ENCODE measurements at regions of chr10 and their contacts with region 1.

Region 1: GRCh38 chr10:61896854-61897661 is 4.4 kb upstream of the ARID5B start:
- DNase-seq: peak; percentile 9 to 70 (median 65)
- H3K4me3 ChIP-seq: peak overlapping the region; percentile 26
- H3K4me3 Mint-ChIP-seq: peak overlapping the region; percentile 49 to 85 (median 78)
- H3K27ac ChIP-seq: no peak overlapping the region
- H3K27ac Mint-ChIP-seq: peak overlapping the region; percentile 3 to 98 (median 82)
- H3K4me1 ChIP-seq: peaks cover 31% of the 10 kb centered on the region
- H3K4me1 Mint-ChIP-seq: peaks cover 30 to 37% (median 34%) of the 10 kb centered on the region in 3 donors
- H3K27me3 ChIP-seq: no peaks in the 10 kb centered on the region
- H3K27me3 Mint-ChIP-seq: no peaks in the 10 kb centered on the region

Region 2: GRCh38 chr10:61869276-61869675 is 27.8 kb before region 1 on chr10:
- CTCF ChIA-PET with region 1: interaction called, 13 read pairs
- POLR2A ChIA-PET with region 1: interaction called, 5 read pairs
- DNase-seq: no peak
- H3K4me3 ChIP-seq: no peak overlapping the region
- H3K4me3 Mint-ChIP-seq: peak overlapping the region in 2 of 7 donors; percentile 12 to 35
- H3K27ac ChIP-seq: no peak overlapping the region
- H3K27ac Mint-ChIP-seq: no peak overlapping the region
- H3K4me1 ChIP-seq: peaks cover 5% of the 10 kb centered on the region
- H3K4me1 Mint-ChIP-seq: peaks cover 3 to 7% (median 5%) of the 10 kb centered on the region in 3 donors
- H3K27me3 ChIP-seq: no peaks in the 10 kb centered on the region
- H3K27me3 Mint-ChIP-seq: peaks cover 0 to 8% of the 10 kb centered on the region in 2 donors

Region 3: DNA sequence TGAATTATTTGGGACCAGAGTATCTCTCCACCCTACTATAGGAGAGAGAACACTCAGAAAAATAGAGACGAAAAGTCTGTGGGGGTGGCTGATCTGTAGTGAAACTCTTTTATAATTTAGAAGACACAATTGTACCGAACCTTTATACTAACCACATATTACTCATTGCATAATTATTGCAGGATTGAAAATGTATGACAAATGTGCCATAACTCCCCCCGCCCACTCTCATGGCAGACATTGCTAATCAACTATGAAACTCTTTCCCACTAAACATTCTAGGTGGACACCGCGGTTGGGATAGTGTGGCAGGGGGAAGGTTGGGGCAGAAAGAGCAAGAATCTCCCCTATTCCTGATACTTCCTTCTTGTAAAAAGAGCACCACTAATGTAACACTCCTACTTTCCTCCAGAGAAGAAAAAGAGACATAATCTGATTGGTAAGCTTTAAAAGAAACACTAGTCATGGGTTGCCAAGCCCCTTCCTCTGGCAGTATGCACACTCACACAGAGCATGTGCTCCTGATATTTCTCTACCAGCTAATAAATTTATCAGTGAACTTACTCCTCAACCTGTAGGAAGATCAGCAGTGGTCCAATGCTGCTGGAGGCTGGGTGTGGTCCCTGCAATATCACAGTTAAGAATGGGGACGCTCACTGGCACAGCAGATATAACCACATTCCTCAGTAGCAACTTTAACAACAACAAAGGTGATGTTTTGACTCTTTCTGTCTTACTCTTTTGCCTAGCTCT is 14.3 kb before region 1 on chr10:
- CTCF ChIA-PET with region 1: interaction called, 12 read pairs
- POLR2A ChIA-PET with region 1: no interaction called
- DNase-seq: no peak
- H3K4me3 ChIP-seq: no peak overlapping the region
- H3K4me3 Mint-ChIP-seq: no peak overlapping the region
- H3K27ac ChIP-seq: no peak overlapping the region
- H3K27ac Mint-ChIP-seq: peak overlapping the region in 2 of 8 donors; percentile 5 to 15
- H3K4me1 ChIP-seq: no peaks in the 10 kb centered on the region
- H3K4me1 Mint-ChIP-seq: peaks cover 11 to 13% (median 12%) of the 10 kb centered on the region in 3 donors
- H3K27me3 ChIP-seq: no peaks in the 10 kb centered on the region
- H3K27me3 Mint-ChIP-seq: peaks cover 3 to 7% of the 10 kb centered on the region in 2 donors

Region 4: DNA sequence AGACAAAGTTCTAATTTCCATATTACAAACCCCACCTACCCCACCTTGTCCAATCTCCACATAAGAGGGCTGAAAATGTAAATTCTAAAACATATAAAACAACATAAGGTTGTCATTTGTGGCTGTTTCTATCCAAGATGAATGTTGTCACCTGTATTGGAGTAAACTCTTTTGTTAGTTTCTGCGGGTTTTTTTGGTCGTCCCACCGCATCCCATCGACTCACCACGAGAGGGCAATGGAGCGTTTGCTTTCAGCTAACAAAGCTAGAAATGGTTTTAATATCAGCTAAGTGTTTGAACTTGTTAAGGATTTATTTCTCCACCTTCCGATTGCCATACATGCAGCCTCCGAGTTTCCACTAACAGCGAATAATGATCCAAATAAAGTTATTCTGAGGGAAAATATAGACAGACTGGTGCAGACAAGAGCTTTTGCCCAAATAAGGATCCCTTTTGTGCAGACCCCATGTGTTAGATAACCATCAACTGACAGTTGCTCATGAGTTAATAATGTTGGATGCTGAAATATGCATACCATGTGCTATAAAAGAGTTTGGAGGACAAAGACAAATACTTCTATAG is 141.6 kb after region 1 on chr10:
- CTCF ChIA-PET with region 1: interaction called, 47 read pairs
- POLR2A ChIA-PET with region 1: interaction called, 14 read pairs
- DNase-seq: peak; percentile 50 to 81 (median 61)
- H3K4me3 ChIP-seq: peak overlapping the region; percentile 10
- H3K4me3 Mint-ChIP-seq: peak overlapping the region in 6 of 7 donors; percentile 9 to 67 (median 42)
- H3K27ac ChIP-seq: no peak overlapping the region
- H3K27ac Mint-ChIP-seq: peak overlapping the region in 6 of 8 donors; percentile 1 to 78 (median 42)
- H3K4me1 ChIP-seq: peaks cover 49% of the 10 kb centered on the region
- H3K4me1 Mint-ChIP-seq: peaks cover 49 to 80% (median 70%) of the 10 kb centered on the region in 3 donors
- H3K27me3 ChIP-seq: no peaks in the 10 kb centered on the region
- H3K27me3 Mint-ChIP-seq: no peaks in the 10 kb centered on the region

Region 5: DNA sequence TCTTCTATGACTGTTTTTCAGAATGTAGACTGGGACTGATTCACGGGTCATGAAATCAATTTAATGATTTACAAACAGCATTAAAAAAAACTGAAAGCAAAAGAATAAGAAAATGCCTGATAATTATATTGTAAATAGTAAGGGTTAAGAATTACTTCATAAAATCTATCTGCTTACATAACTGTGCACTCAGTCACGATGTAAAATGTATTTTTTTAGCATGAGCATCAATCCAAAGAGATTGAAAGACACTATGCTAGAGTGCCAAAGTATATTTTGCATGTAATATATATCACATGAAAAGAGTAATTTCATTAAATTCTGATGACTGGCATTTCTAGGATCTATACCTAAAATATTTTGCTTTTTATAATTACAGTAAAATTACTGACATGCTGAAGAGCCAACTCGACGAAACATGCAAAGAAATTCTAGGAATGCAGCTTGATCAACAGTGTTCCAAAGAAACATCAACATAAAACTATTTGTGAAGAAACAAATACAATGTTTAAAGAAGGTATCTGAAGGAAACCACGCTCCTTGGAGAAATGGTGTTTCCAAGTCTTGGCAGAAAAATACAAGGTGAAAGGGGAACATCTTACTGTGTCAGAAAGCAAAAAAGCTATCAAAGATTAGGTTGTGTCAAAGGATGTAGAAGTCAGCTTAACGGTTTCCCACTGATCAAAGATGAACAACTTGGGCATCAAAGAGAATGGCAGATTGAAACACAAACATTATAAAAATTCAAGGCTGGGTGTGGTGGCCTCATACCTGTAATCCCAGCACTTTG is 336.6 kb after region 1 on chr10:
- CTCF ChIA-PET with region 1: no interaction called
- POLR2A ChIA-PET with region 1: no interaction called
- DNase-seq: no peak
- H3K4me3 ChIP-seq: no peak overlapping the region
- H3K4me3 Mint-ChIP-seq: peak overlapping the region in 5 of 7 donors; percentile 25 to 65 (median 50)
- H3K27ac ChIP-seq: no peak overlapping the region
- H3K27ac Mint-ChIP-seq: peak overlapping the region in 4 of 8 donors; percentile 44 to 76 (median 60)
- H3K4me1 ChIP-seq: peaks cover 7% of the 10 kb centered on the region
- H3K4me1 Mint-ChIP-seq: peaks cover 10 to 21% (median 12%) of the 10 kb centered on the region in 3 donors
- H3K27me3 ChIP-seq: no peaks in the 10 kb centered on the region
- H3K27me3 Mint-ChIP-seq: no peaks in the 10 kb centered on the region